ENCODE measurements at regions of chr12 and their contacts with region 1.

Region 1: GRCh38 chr12:109093022-109093918 is at the start of gene ALKBH2:
- DNase-seq: peak; percentile 96
- H3K4me3 Mint-ChIP-seq: peak within 1 kb of the TSS; percentile 85
- H3K27ac Mint-ChIP-seq: peak within 1 kb of the TSS; percentile 81
- H3K4me1 Mint-ChIP-seq: peaks cover 44% of the 10 kb centered on the region
- H3K27me3 Mint-ChIP-seq: no peaks in the 10 kb centered on the region
- total RNA-seq, gene ALKBH2: 31.1 to 32.7 TPM

Region 2: GRCh38 chr12:108514973-108515814 is 578.1 kb before region 1 on chr12 and contains the start of gene FICD:
- CTCF ChIA-PET with region 1: no interaction called
- intact Hi-C with region 1: loop called (anchors 5 kb)
- DNase-seq: peak; percentile 100
- H3K4me3 Mint-ChIP-seq: peak within 1 kb of the TSS; percentile 90
- H3K27ac Mint-ChIP-seq: peak within 1 kb of the TSS; percentile 84
- H3K4me1 Mint-ChIP-seq: peaks cover 28% of the 10 kb centered on the region
- H3K27me3 Mint-ChIP-seq: no peaks in the 10 kb centered on the region
- total RNA-seq, gene FICD: 3.4 to 3.7 TPM

Region 3: GRCh38 chr12:108664338-108665258 is 428.7 kb before region 1 on chr12:
- CTCF ChIA-PET with region 1: no interaction called
- intact Hi-C with region 1: loop called (anchors 1 kb)
- DNase-seq: peak; percentile 95
- H3K4me3 Mint-ChIP-seq: peak overlapping the region; percentile 41
- H3K27ac Mint-ChIP-seq: peak overlapping the region; percentile 74
- H3K4me1 Mint-ChIP-seq: peaks cover 30% of the 10 kb centered on the region
- H3K27me3 Mint-ChIP-seq: no peaks in the 10 kb centered on the region

Region 4: GRCh38 chr12:108838194-108839017 is 254.9 kb before region 1 on chr12:
- CTCF ChIA-PET with region 1: no interaction called
- intact Hi-C with region 1: loop called (anchors 1 kb)
- DNase-seq: peak; percentile 81
- H3K4me3 Mint-ChIP-seq: peak overlapping the region; percentile 25
- H3K27ac Mint-ChIP-seq: peak overlapping the region; percentile 83
- H3K4me1 Mint-ChIP-seq: peaks cover 29% of the 10 kb centered on the region
- H3K27me3 Mint-ChIP-seq: no peaks in the 10 kb centered on the region

Region 5: DNA sequence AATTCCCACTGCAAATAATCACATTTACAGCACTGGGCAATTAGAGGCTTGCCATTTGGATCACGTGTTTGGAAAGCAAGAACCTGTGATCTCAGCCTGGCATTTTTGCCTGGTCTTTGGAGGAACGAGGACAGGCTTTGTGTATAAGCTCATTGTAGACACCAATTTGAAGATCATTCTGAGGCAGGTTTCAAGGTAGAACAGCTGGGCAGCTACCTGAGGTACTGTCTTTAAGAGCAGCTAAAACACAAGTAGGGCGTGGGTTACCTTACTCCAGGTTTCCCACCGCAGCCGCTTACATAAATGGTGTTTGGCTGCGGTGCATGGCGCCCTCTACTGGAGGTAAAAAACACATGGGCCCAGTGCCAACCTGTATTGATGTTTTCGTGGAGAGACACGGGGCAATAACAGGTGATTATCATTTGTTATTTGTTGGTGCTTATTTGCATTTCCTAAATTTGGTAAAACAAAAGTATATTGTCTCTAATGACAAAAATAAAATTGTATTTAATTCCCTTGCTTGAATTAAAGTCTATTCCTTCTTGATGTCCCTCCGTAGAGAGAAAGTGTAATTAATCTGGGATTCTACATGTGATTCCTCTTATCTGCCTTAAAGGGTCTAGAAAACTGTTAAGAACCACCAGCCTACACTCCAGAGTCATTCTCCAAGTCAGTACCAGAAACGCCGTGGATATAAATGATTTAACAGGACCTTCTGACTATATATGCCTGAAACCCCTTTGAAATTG is 142.1 kb before region 1 on chr12:
- CTCF ChIA-PET with region 1: interaction called, 7 read pairs
- intact Hi-C with region 1: loop called (anchors 1 kb)
- DNase-seq: peak; percentile 82
- H3K4me3 Mint-ChIP-seq: no peak overlapping the region
- H3K27ac Mint-ChIP-seq: no peak overlapping the region
- H3K4me1 Mint-ChIP-seq: no peaks in the 10 kb centered on the region
- H3K27me3 Mint-ChIP-seq: no peaks in the 10 kb centered on the region

Region 6: GRCh38 chr12:109027767-109028166 is 65.5 kb before region 1 on chr12:
- CTCF ChIA-PET with region 1: no interaction called
- intact Hi-C with region 1: no loop called
- DNase-seq: no peak
- H3K4me3 Mint-ChIP-seq: no peak overlapping the region
- H3K27ac Mint-ChIP-seq: no peak overlapping the region
- H3K4me1 Mint-ChIP-seq: no peaks in the 10 kb centered on the region
- H3K27me3 Mint-ChIP-seq: peaks cover 4% of the 10 kb centered on the region

Region 7: GRCh38 chr12:109105176-109105575 is 11.9 kb after region 1 on chr12:
- CTCF ChIA-PET with region 1: no interaction called
- intact Hi-C with region 1: no loop called
- DNase-seq: no peak
- H3K4me3 Mint-ChIP-seq: no peak overlapping the region
- H3K27ac Mint-ChIP-seq: no peak overlapping the region
- H3K4me1 Mint-ChIP-seq: peaks cover 7% of the 10 kb centered on the region
- H3K27me3 Mint-ChIP-seq: no peaks in the 10 kb centered on the region

Region 8: DNA sequence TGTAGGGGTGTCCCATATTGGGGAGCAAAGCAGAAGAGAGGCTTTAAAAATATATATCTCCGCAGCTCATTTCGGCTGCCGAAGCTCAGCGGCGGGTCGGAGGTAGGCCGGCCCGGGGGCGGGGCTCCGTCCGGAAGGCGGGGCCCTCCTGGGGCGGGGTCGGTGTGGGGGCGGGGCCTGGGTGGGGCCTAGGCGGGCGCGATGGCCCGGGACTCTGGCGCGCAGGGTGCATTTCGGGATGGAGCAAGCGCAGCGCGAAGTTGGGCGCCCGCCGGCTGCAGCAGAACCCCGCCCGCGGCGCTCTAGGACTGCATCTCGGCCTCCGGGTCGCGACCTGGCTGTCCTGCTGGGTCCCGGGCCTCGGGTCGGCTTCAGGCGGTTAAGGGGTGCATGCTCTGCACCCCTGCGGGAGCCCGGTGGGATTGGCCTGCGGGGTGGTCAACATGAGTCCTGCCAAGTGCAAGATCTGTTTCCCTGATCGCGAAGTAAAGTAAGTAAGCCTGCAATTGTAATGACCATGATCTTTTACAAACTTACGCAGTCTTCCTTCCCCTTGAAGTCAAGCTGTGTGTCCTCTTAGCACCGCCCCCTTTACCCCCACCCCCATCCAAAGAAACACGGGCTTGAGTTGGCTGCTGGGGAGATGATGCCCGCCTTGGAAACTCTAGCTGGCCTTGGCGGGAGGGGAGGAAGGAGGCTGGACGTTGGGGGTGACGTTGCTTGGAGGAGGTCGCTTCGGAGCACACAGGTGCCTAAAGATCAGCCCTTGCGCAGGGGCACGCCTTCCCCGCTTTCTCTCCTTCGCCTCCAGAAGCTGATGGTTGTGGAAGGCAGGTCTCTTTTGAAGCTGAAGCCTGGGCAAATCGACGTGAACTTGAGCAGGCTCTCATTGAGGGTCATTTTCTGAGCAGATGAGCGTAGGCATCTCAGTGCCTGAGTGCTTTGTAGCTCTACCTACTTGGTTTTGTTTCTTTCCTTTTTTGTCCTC is 61.5 kb after region 1 on chr12:
- CTCF ChIA-PET with region 1: interaction called, 7 read pairs
- intact Hi-C with region 1: loop called (anchors 1 kb)
- DNase-seq: peak; percentile 85
- H3K4me3 Mint-ChIP-seq: peak overlapping the region; percentile 90
- H3K27ac Mint-ChIP-seq: peak overlapping the region; percentile 81
- H3K4me1 Mint-ChIP-seq: peaks cover 17% of the 10 kb centered on the region
- H3K27me3 Mint-ChIP-seq: no peaks in the 10 kb centered on the region

Region 9: GRCh38 chr12:109165599-109165998 is 72.3 kb after region 1 on chr12:
- CTCF ChIA-PET with region 1: no interaction called
- intact Hi-C with region 1: no loop called
- DNase-seq: no peak
- H3K4me3 Mint-ChIP-seq: no peak overlapping the region
- H3K27ac Mint-ChIP-seq: no peak overlapping the region
- H3K4me1 Mint-ChIP-seq: peaks cover 5% of the 10 kb centered on the region
- H3K27me3 Mint-ChIP-seq: no peaks in the 10 kb centered on the region

Measured in activated naive CD4-positive, alpha-beta T cell treated with anti-CD3 and anti-CD28 coated beads for 36 hours (primary cell).